ENCODE measurements at regions of chr12 and their contacts with region 1.

Region 1: DNA sequence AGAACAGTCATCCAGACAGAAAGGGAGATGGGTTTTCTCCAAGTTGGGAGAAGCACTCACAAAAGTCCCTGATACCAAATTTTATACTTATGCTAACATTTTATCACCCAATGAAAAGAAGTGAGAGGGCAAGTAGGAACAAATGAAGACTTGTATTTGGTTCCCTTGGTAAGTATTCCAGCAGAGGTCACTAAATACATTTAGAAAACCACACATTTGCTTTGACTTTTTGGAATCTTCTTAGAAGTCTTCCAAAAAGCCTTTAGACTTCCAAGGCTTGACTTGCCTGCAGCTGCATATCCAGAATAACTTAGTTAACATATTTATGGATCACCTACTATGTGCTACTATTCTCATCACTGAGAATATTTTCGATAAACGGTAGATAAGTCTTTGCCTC is 3.1 kb upstream of the GYS2 start:
- DNase-seq: no peak
- ATAC-seq: no peak
- H3K4me3 ChIP-seq: no peak overlapping the region
- H3K27ac ChIP-seq: no peak overlapping the region
- H3K4me1 ChIP-seq: no peaks in the 10 kb centered on the region
- H3K27me3 ChIP-seq: peaks cover 0 to 2% of the 10 kb centered on the region in 2 donors

Region 2: DNA sequence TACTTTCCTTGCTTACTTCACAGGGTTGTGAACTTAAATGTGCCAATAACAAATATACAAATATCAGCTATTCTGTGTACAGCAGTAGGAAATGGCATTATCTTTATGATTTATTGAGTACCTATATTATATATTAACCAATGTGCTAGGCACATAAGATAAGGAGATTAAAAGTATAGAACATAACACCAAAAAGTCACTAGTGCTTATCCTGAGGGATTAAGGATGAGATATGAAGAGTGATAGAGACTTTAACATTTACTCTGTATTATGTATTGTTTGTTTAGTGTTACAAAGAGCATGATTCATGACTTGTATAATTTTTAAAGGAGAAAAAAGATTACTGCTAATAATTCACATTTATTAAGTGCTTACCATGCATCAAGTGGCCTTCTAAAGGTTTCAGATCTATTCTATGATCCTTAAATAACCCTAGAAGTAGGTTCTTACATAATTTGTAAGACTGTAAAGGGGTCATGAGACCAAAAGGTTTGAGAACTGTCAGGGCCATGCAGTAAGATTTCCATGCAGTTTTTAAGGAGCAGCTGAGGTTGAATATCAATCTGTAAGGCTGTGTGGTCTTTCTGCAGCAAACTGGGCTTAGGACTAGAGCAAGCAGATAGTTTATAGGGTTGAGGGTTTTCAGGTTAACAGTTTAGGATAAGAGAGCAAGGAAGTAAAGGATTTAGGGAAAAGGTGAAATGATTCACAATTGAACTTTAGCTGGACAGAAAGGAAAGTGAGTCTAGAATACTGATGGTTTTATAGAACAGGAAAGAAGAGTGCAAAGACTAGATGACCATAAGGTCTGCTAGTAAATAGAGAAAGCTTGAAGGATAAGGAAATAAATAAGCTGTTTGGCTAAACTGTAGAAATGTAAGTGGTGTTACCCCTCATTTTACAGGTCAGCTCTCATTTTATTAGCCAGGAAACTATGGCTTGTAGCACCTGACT is 163.2 kb before region 1 on chr12:
- intact Hi-C with region 1: no loop called
- DNase-seq: no peak
- ATAC-seq: no peak
- H3K4me3 ChIP-seq: no peak overlapping the region
- H3K27ac ChIP-seq: no peak overlapping the region
- H3K4me1 ChIP-seq: no peaks in the 10 kb centered on the region
- H3K27me3 ChIP-seq: no peaks in the 10 kb centered on the region

Region 3: DNA sequence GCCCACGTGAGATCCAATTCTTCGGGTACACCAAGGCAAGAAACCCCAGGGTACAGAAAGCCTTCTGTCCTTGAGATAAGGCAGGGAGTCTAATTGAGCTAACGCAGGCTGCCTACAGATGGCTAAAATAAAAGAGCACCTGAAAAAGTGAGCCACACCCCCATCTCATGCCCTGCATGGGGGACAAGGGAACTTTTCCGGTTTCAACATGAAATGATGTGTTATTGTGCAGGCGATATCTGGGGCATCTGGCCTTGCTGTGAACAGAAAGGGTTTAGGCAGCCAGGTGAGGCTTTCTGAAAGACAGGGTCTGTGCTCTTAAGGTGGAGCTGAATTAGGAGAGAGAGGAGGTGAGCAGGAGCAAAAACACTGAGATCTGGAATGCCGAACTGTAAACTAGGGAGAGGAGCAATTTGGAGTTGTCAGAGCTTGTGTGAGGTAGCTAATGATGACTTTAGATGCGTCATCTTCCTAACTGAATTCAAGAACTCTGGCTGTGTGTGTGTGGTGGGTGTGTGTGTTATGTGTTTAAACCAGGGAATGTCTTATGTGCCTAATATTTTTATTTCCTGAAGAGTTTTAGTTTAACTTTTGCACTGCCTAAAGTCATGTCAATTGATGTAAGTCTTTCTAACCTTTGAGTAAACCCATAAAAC is 70.0 kb after region 1 on chr12:
- intact Hi-C with region 1: loop called (anchors 5 kb)
- DNase-seq: no peak
- ATAC-seq: no peak
- H3K4me3 ChIP-seq: no peak overlapping the region
- H3K27ac ChIP-seq: no peak overlapping the region
- H3K4me1 ChIP-seq: no peaks in the 10 kb centered on the region
- H3K27me3 ChIP-seq: no peaks in the 10 kb centered on the region

Region 4: DNA sequence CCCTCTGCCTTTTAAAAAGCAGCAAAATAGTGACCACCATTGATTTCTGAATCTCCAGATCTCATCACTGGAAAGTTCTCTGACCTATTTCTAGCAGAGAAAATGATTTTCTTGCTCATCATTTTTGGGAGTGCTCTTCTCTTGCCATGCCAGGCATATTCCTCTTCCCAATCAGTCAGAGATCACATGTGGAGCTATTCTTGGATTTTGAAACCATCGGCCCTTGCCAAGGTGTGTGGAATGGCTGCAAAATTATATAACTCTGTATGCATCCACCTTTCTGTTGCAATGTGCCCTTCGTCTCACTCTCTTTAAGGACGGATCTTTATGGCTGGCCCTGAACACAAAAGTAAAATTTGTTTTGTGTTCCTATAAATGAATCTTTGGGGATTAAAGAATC is 75.4 kb after region 1 on chr12:
- intact Hi-C with region 1: loop called (anchors 5 kb)
- DNase-seq: no peak
- ATAC-seq: no peak
- H3K4me3 ChIP-seq: no peak overlapping the region
- H3K27ac ChIP-seq: no peak overlapping the region
- H3K4me1 ChIP-seq: no peaks in the 10 kb centered on the region
- H3K27me3 ChIP-seq: no peaks in the 10 kb centered on the region